ENCODE measurements at regions of chr9 and their contacts with region 1.

Region 1: GRCh38 chr9:83636813-83637212 is 13.9 kb downstream of the IDNK start:
- DNase-seq: no peak
- ATAC-seq: no peak
- H3K4me3 ChIP-seq: no peak overlapping the region
- H3K27ac ChIP-seq: no peak overlapping the region
- H3K4me1 ChIP-seq: no peaks in the 10 kb centered on the region
- H3K27me3 ChIP-seq: no peaks in the 10 kb centered on the region
- CTCF ChIP-seq: no peak

Region 2: GRCh38 chr9:83754383-83754977 is 117.7 kb after region 1 on chr9:
- CTCF ChIA-PET with region 1: no interaction called
- POLR2A ChIA-PET with region 1: no interaction called
- intact Hi-C with region 1: no loop called
- DNase-seq: no peak
- ATAC-seq: no peak
- H3K4me3 ChIP-seq: no peak overlapping the region
- H3K27ac ChIP-seq: no peak overlapping the region
- H3K4me1 ChIP-seq: no peaks in the 10 kb centered on the region
- H3K27me3 ChIP-seq: no peaks in the 10 kb centered on the region
- CTCF ChIP-seq: no peak

Region 3: GRCh38 chr9:84404095-84404686 is 767.4 kb after region 1 on chr9:
- CTCF ChIA-PET with region 1: no interaction called
- POLR2A ChIA-PET with region 1: interaction called, 15 read pairs
- intact Hi-C with region 1: no loop called
- DNase-seq: peak; percentile 5
- ATAC-seq: no peak
- H3K4me3 ChIP-seq: no peak overlapping the region
- H3K27ac ChIP-seq: no peak overlapping the region
- H3K4me1 ChIP-seq: no peaks in the 10 kb centered on the region
- H3K27me3 ChIP-seq: no peaks in the 10 kb centered on the region
- CTCF ChIP-seq: peak; percentile 57

Measured in PC-3 (cell line).